Activated naive CD4-positive, alpha-beta T cell treated with anti-CD3 and anti-CD28 coated beads for 36 hours (primary cell): ENCODE measurements at regions of chr2 and their contacts with region 1.

Region 1: DNA sequence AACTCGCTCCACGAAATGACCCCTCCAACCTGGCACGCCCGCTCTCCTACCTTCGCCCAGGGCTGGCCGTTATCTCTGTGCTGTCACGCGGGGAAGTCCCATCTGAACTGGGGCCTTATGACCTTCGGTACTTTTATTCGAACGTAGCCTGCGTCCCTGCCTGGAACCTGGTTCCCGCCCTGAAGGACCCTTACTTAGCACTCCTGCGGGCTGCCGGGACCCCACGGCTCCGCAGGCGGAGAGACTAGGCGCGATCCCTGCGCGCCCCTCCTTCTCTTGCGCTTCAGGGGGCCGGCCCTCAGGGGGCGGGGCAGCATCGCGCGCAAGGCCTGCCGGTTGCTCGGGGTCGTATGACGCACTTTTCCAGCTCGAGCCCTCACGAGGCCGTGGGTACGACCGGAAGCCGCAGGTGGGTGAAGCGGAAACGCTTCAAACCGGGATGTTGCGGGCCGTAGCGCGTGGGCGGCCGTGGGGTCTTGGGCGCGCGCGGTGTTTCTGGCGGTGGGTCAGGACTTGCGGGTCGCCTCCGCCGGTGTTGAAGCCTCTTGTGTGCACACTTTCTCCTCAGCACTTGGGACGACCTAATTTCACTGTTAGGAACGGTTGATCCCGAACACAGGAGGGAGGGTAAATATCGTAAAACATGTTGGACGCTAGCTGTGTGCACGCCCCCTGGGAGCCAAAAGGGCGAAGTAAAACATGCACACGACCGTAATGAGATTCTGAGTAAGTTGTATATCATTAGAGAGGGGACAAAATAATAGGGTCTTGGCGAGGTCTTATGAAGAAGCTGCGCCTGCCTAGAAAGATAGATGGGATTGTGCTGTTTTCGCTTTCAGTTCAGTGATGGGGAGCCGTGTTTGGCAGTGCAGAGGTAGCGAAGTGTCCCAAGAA is at the starts of genes LIPT1 and TSGA10:
- DNase-seq: peak; percentile 95
- H3K4me3 Mint-ChIP-seq: no peak within 1 kb of the TSS
- H3K27ac Mint-ChIP-seq: no peak within 1 kb of the TSS
- H3K4me1 Mint-ChIP-seq: peaks cover 39% of the 10 kb centered on the region
- H3K27me3 Mint-ChIP-seq: no peaks in the 10 kb centered on the region
- total RNA-seq, gene LIPT1: 7.0 to 8.1 TPM
- total RNA-seq, gene TSGA10: 7.2 to 8.9 TPM

Region 2: GRCh38 chr2:98455494-98455976 is 699.4 kb before region 1 on chr2:
- CTCF ChIA-PET with region 1: no interaction called
- intact Hi-C with region 1: loop called (anchors 10 kb)
- DNase-seq: peak; percentile 66
- H3K4me3 Mint-ChIP-seq: peak overlapping the region; percentile 59
- H3K27ac Mint-ChIP-seq: peak overlapping the region; percentile 89
- H3K4me1 Mint-ChIP-seq: peaks cover 98% of the 10 kb centered on the region
- H3K27me3 Mint-ChIP-seq: no peaks in the 10 kb centered on the region

Region 3: GRCh38 chr2:98608116-98608999 is 546.5 kb before region 1 on chr2 and contains the starts of genes COA5 and UNC50:
- CTCF ChIA-PET with region 1: no interaction called
- intact Hi-C with region 1: loop called (anchors 10 kb)
- DNase-seq: peak; percentile 90
- H3K4me3 Mint-ChIP-seq: peak within 1 kb of the TSS; percentile 89
- H3K27ac Mint-ChIP-seq: peak within 1 kb of the TSS; percentile 93
- H3K4me1 Mint-ChIP-seq: peaks cover 60% of the 10 kb centered on the region
- H3K27me3 Mint-ChIP-seq: no peaks in the 10 kb centered on the region
- total RNA-seq, gene COA5: 34.4 to 37.8 TPM
- total RNA-seq, gene UNC50: 23.0 to 24.1 TPM

Region 4: GRCh38 chr2:98899041-98899702 is 255.7 kb before region 1 on chr2:
- CTCF ChIA-PET with region 1: no interaction called
- intact Hi-C with region 1: no loop called
- DNase-seq: no peak
- H3K4me3 Mint-ChIP-seq: no peak overlapping the region
- H3K27ac Mint-ChIP-seq: no peak overlapping the region
- H3K4me1 Mint-ChIP-seq: no peaks in the 10 kb centered on the region
- H3K27me3 Mint-ChIP-seq: no peaks in the 10 kb centered on the region

Region 5: DNA sequence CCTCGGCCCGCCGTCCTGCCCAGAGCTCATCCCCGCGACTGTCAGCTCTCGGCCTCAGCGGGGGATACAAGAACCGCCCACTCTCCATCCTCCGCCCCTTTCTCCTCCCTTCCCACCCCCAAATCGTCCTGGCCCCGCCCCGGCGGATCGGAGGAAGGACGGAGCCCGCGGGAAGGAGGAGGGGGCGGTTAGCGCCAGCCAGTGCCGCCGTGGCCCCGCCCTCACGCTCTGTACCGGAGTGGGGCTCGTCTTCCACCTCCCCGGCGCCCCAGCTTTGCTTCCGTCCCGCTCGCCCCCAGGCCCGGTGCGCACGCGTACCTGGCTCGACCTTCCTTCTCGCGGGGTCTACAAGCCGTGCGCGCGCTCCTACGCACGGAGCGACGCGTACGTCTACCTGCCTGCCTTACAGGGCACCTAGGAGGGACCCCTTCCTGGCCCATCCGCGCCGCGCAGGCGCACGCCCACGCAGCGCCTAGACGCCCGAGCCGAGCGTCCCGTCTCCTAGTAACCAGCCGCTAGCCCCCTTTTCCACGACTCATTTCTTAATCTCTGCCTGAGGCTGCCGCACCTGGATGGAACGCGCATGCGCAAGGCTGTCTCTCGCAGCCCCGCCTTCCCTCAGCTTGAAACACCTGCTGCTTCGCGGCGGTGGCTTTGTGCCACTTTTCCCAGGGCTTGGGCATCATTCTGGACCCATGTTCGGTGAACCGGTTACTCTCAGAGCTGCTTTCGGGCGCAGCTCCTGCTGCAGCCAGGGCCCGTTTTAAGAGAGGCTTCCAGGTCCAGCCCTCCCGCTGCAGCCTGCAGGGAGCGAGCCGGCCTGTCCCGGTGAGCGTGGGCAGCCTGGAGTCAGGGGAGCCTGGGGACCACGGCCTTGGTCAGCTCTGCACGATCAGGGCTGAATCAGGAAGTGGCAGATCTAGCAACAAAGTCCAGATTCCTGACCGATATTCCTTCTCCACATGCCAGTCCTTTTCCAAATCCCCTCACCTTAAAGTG is 13.5 kb before region 1 on chr2 and contains the start of gene C2orf15:
- CTCF ChIA-PET with region 1: interaction called, 4 read pairs
- intact Hi-C with region 1: loop called (anchors 1 kb)
- DNase-seq: peak; percentile 96
- H3K4me3 Mint-ChIP-seq: peak within 1 kb of the TSS; percentile 93
- H3K27ac Mint-ChIP-seq: peak within 1 kb of the TSS; percentile 86
- H3K4me1 Mint-ChIP-seq: peaks cover 17% of the 10 kb centered on the region
- H3K27me3 Mint-ChIP-seq: no peaks in the 10 kb centered on the region
- total RNA-seq, gene C2orf15: 1.4 to 1.6 TPM

Region 6: DNA sequence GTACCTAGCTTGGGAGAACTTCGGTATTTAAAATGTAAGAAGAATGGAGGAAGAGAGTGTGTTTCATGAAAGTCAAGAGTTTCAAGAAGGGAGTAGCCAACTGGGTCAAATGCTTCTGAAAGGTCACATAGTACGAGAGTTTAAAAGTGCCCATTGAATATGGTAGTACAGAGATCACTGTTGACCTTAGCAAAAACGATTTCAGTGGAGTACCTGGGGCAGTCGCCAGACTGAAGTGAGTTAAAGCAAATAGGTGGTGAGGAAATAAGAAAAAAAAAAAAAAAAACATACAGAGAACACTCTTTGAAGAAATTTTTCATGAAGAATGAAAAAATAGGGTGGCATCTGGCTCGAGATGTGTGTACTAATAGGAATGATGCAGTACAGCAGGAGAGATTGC is 11.3 kb after region 1 on chr2:
- CTCF ChIA-PET with region 1: interaction called, 14 read pairs
- intact Hi-C with region 1: no loop called
- DNase-seq: no peak
- H3K4me3 Mint-ChIP-seq: no peak overlapping the region
- H3K27ac Mint-ChIP-seq: no peak overlapping the region
- H3K4me1 Mint-ChIP-seq: peaks cover 13% of the 10 kb centered on the region
- H3K27me3 Mint-ChIP-seq: no peaks in the 10 kb centered on the region

Region 7: DNA sequence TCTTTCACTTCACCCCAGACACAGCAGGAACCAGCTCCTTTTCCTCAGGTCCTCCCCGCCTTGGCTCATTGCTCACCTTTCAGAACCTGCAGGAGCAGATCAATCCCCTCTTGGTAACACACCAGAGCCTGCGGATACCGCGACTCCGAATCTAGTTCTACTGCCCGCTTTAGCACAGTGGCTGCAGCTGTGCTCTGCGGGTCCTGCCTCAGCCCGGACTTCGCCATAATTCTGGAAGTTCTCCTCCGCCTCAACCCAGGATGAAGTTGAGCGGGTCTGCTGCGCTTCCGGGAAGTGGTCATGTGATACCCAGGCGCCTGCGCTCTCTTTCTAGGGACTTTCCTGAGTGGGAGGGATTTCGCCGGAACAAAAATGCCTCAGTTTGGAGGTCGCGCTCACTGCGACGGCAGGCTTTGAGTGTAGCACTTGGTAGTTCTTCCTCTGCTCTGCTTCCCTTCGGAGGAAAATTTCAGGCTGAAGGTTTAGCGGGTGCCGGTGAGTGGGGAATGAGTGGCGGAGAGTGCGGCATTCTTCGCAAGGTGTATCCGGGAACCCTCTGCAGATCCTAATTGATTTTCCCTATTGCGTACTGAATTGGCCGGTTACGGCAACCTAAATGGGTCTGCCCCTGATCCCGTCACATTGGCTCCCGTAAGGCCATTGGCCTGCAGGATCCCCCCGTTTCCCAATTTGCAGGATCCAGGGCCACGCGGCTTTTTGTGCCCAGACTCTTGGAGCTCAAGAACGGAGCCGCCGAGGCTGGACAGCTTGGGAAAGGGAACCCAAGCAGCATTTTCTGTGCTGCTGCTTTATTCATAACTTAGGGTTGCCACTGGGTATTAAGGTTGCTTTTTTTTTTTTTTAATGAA is 26.1 kb after region 1 on chr2 and contains the starts of genes MITD1 and MRPL30:
- CTCF ChIA-PET with region 1: interaction called, 7 read pairs
- intact Hi-C with region 1: loop called (anchors 1 kb)
- DNase-seq: peak; percentile 94
- H3K4me3 Mint-ChIP-seq: peak within 1 kb of the TSS; percentile 95
- H3K27ac Mint-ChIP-seq: peak within 1 kb of the TSS; percentile 92
- H3K4me1 Mint-ChIP-seq: peaks cover 63% of the 10 kb centered on the region
- H3K27me3 Mint-ChIP-seq: no peaks in the 10 kb centered on the region
- total RNA-seq, gene MITD1: 61.4 to 64.1 TPM
- total RNA-seq, gene MRPL30: 40.2 to 43.3 TPM